ENCODE measurements at regions of chr1 and their contacts with region 1.

Region 1: GRCh38 chr1:55284852-55285251 is 69.7 kb upstream of the USP24 start:
- DNase-seq: peak; percentile 67
- H3K4me3 Mint-ChIP-seq: no peak overlapping the region
- H3K27ac Mint-ChIP-seq: no peak overlapping the region
- H3K4me1 Mint-ChIP-seq: peaks cover 5% of the 10 kb centered on the region
- H3K27me3 Mint-ChIP-seq: no peaks in the 10 kb centered on the region
- CTCF ChIP-seq: peak; percentile 57

Region 2: DNA sequence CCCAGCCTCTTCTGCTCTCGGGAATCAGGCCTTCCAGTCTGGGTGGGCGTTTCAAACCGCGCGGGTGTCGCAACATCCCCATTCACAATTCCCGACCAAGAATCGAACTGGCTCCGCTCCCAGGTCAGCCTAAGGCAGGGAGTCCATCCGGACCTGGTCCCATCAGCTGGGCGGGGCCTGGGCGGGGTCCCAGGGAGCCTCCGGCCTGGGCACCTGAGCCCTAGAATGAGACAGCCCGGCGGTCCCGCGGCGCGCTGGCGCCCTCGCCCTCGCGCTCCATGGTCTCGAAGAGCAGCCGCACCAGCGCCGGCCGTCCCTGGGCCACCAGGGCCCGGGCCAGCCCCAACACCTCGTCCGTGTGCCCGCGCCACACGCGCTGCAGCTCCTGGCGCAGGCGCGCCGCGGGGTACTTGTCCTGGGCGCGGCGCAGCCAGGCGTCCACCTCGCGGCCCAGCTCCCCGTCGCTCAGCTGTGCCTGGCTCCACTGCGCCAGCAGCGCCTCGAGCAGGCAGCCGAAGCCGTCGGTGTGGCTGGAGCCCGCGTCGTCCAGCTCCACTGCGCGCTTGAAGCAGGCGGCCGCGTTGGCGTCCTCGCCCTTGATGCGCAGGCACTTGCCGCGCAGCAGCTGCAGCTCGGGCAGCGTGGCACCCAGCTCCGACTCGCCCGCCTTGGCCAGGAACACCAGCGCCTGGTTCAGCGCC is 503.7 kb before region 1 on chr1:
- CTCF ChIA-PET with region 1: no interaction called
- POLR2A ChIA-PET with region 1: no interaction called
- intact Hi-C with region 1: no loop called
- DNase-seq: no peak
- H3K4me3 Mint-ChIP-seq: no peak overlapping the region
- H3K27ac Mint-ChIP-seq: no peak overlapping the region
- H3K4me1 Mint-ChIP-seq: peaks cover 12% of the 10 kb centered on the region
- H3K27me3 Mint-ChIP-seq: no peaks in the 10 kb centered on the region
- CTCF ChIP-seq: no peak

Region 3: GRCh38 chr1:55140546-55140983 is 144.3 kb before region 1 on chr1:
- CTCF ChIA-PET with region 1: interaction called, 194 read pairs
- POLR2A ChIA-PET with region 1: no interaction called
- intact Hi-C with region 1: no loop called
- DNase-seq: peak; percentile 86
- H3K4me3 Mint-ChIP-seq: no peak overlapping the region
- H3K27ac Mint-ChIP-seq: peak overlapping the region; percentile 46
- H3K4me1 Mint-ChIP-seq: peaks cover 5% of the 10 kb centered on the region
- H3K27me3 Mint-ChIP-seq: no peaks in the 10 kb centered on the region
- CTCF ChIP-seq: peak; percentile 66

Region 4: GRCh38 chr1:55478742-55479141 is 193.9 kb after region 1 on chr1:
- CTCF ChIA-PET with region 1: no interaction called
- POLR2A ChIA-PET with region 1: no interaction called
- intact Hi-C with region 1: loop called (anchors 10 kb)
- DNase-seq: peak; percentile 40
- H3K4me3 Mint-ChIP-seq: no peak overlapping the region
- H3K27ac Mint-ChIP-seq: no peak overlapping the region
- H3K4me1 Mint-ChIP-seq: peaks cover 12% of the 10 kb centered on the region
- H3K27me3 Mint-ChIP-seq: no peaks in the 10 kb centered on the region
- CTCF ChIP-seq: peak; percentile 34

Region 5: DNA sequence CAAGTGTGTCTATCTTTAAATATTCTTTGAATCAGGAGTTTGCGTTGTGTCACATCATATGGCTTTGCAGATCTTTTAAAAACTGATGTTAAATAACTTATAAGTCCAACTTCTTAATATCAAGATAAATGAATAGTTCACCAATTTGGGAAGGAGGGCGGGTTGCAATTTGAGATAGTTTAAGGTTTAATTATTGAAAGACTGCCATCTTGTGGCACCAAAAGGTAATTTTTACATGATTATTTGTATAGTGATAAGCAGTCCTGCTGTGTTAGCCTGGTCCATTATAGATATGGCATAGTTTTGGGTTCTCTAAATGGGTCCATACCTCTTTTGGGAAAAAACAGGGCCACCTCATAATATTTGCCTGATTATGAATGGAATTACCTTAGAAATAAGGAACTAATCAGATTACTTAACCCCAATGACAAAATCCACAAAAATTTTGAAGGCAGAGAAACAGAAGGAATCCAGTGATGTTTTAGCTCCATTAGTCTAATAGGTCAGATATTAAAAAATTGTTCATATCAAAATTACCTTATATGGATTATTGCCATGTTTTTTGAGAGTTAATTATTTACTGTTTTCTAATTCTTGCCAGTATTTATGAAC is 1424.5 kb after region 1 on chr1:
- CTCF ChIA-PET with region 1: interaction called, 24 read pairs
- POLR2A ChIA-PET with region 1: no interaction called
- intact Hi-C with region 1: loop called (anchors 5 kb)
- DNase-seq: peak; percentile 69
- H3K4me3 Mint-ChIP-seq: no peak overlapping the region
- H3K27ac Mint-ChIP-seq: no peak overlapping the region
- H3K4me1 Mint-ChIP-seq: peaks cover 6% of the 10 kb centered on the region
- H3K27me3 Mint-ChIP-seq: no peaks in the 10 kb centered on the region
- CTCF ChIP-seq: peak; percentile 66

Region 6: DNA sequence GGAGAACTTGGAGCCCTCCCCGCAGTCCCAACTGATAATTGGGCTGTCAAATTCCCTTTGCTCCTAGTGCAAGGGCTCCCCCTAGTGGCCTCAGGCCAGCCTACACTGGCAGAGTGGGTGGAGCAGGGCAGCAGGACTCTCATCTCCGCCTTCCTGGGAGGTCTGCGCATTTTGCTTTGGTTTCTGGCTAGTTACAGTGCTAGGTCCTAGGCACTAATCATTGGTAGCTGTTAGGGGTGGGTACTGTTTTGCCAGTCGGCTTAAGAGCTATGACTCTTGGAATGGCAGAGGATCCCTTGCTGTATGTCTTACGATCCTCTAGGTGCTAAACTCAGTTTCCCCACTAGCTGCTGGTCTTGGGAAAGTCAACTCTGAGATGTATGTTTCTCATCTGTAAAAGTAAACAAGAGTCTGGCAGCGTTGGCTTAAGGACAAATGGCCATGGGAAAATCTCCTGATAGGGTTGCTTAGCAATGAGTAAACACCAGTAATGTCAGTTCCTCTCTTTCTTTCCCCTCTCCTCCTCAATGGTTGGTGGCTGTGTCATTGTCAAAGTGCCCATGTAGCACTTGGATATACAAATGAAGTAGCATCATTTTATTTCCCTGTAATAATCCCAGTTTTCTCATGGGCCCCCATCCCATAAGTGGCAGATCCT is 1536.4 kb after region 1 on chr1:
- CTCF ChIA-PET with region 1: interaction called, 28 read pairs
- POLR2A ChIA-PET with region 1: no interaction called
- intact Hi-C with region 1: loop called (anchors 2 kb)
- DNase-seq: peak; percentile 78
- H3K4me3 Mint-ChIP-seq: no peak overlapping the region
- H3K27ac Mint-ChIP-seq: no peak overlapping the region
- H3K4me1 Mint-ChIP-seq: peaks cover 8% of the 10 kb centered on the region
- H3K27me3 Mint-ChIP-seq: peaks cover 11% of the 10 kb centered on the region
- CTCF ChIP-seq: peak; percentile 95